Left lung (tissue), 14 donors: ENCODE measurements at regions of chr15 and their contacts with region 1.

Region 1: DNA sequence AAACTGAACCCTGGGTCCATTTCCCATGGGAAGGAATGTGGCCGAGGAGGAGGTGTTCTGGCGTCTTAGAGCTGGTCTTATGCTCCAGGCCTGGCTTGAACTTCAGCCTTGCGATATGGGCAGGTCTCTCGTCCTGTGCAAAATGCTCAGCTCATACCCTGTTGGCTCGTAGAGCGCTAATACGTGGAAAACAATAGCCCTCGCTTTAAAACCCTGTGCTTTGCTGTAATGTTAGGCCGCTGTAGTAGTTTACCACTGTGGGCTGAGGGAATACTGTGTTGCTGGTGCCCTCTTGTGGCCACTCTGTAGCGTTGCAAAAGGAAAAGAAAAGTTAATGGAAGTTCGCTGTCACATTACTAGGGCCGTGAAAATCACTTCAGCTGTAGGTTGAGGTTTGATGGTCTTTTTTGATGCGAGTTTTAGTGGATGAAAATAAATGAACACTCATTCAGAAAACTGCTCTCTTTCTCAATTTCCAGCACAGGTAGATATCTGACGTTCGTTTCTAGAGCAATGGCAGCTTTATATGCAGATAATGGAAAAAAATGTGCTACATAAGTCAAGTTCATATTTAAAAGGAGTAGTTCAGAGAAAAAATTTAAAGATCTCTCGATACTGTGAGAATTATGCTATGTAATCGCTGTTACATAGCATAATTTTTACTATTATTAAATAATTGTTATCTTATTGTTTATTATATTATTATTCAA is 92.9 kb downstream of the MCTP2 start:
- DNase-seq: peak in 3 of 4 donors; percentile 45 to 80 (median 61)
- ATAC-seq: peak; percentile 97
- H3K4me3 ChIP-seq: no peak overlapping the region
- H3K27ac ChIP-seq: no peak overlapping the region
- H3K4me1 ChIP-seq: peaks cover 0 to 20% of the 10 kb centered on the region in 2 donors
- H3K27me3 ChIP-seq: no peaks in the 10 kb centered on the region
- CTCF ChIP-seq: peak; percentile 88 to 93

Region 2: DNA sequence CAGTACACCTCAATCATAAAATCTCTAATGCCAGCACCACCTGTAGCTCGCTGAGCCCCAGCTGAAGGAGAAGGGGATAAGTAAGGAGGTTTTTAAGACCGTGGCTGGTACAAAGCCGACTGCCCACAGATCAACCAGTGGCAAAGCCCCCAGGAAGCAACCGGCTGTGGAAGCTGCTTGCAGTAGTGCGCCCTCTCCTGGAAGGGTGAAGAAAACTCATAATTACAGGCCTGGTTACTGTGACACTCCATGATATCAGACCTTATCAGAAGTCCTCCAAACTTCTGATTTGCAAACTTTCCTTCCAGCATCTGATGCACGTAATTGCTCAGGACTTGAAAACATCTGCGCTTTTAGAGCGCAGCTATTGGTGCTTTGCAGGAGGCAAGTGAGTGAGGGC is 156.0 kb before region 1 on chr15:
- intact Hi-C with region 1: loop called in 1 of 2 experiments (anchors 5 kb)
- DNase-seq: no peak
- ATAC-seq: no peak
- H3K4me3 ChIP-seq: no peak overlapping the region
- H3K27ac ChIP-seq: no peak overlapping the region
- H3K4me1 ChIP-seq: peaks cover 0 to 16% of the 10 kb centered on the region in 2 donors
- H3K27me3 ChIP-seq: no peaks in the 10 kb centered on the region
- CTCF ChIP-seq: peak in 1 of 2 donors; percentile 28

Region 3: GRCh38 chr15:94212291-94212690 is 112.0 kb before region 1 on chr15:
- intact Hi-C with region 1: no loop called
- DNase-seq: no peak
- ATAC-seq: no peak
- H3K4me3 ChIP-seq: no peak overlapping the region
- H3K27ac ChIP-seq: no peak overlapping the region
- H3K4me1 ChIP-seq: peaks cover 0 to 1% of the 10 kb centered on the region in 2 donors
- H3K27me3 ChIP-seq: peaks cover 0 to 7% of the 10 kb centered on the region in 2 donors
- CTCF ChIP-seq: no peak

Region 4: DNA sequence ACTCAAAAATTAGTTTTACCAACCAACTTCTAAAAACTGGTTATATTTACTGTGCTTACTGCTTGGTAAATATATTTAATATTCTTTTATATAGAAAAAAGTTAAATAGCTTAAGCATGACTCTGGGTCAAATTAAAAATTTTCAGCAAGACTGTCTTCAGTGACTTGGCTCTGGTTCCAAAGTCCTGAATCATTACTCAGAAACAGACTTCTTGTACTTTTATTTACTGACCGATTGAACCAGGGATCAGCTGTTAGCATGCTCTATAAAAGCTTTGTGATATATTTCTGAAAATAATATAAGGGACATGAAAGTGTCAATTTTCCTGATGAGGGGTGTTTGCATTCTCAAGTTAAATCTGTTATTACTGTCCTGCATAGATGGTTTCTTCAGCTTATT is 71.4 kb after region 1 on chr15:
- intact Hi-C with region 1: no loop called
- DNase-seq: no peak
- ATAC-seq: no peak
- H3K4me3 ChIP-seq: no peak overlapping the region
- H3K27ac ChIP-seq: no peak overlapping the region
- H3K4me1 ChIP-seq: peaks cover 4 to 15% of the 10 kb centered on the region in 2 donors
- H3K27me3 ChIP-seq: no peaks in the 10 kb centered on the region
- CTCF ChIP-seq: no peak